Caco-2 (cell line): ENCODE measurements at regions of chr6 and their contacts with region 1.

Region 1: DNA sequence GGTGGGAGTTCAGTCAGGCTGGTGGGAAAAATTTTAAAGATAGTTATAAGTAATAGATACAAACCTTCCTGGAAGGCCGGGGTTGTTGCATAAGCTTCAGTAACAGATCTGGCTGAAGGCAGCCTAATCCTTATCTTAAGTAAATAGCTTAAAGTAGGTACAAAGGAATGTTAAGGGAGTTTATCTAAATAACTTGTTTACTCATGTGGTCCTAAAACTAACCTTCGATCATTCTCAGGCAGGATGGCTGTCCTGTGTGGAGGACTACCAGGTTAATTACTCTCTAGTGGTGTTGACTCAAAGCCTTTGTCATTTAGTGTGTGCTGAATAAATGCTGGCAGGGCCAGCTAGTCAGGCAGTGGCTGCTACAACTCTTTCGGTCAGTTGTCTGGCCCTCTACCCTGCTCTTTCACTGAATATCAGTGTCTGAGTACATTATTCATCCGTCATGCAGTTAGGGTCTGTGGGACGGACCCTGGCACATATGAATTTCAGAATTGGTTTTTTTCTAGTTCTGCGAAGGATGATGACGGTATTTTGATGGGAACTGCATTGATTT is 131.6 kb upstream of the TAB2 start:
- DNase-seq: peak in 1 of 2 experiments; percentile 50
- H3K4me3 ChIP-seq: no peak overlapping the region
- H3K4me3 Mint-ChIP-seq: no peak overlapping the region
- H3K27ac Mint-ChIP-seq: no peak overlapping the region
- H3K4me1 ChIP-seq: no peaks in the 10 kb centered on the region
- H3K4me1 Mint-ChIP-seq: no peaks in the 10 kb centered on the region
- H3K27me3 ChIP-seq: no peaks in the 10 kb centered on the region
- H3K27me3 Mint-ChIP-seq: no peaks in the 10 kb centered on the region
- CTCF ChIP-seq: no peak

Region 2: GRCh38 chr6:149112976-149113375 is 72.9 kb before region 1 on chr6:
- CTCF ChIA-PET with region 1: no interaction called
- POLR2A ChIA-PET with region 1: no interaction called
- intact Hi-C with region 1: no loop called
- DNase-seq: no peak
- H3K4me3 ChIP-seq: no peak overlapping the region
- H3K4me3 Mint-ChIP-seq: no peak overlapping the region
- H3K27ac Mint-ChIP-seq: no peak overlapping the region
- H3K4me1 ChIP-seq: no peaks in the 10 kb centered on the region
- H3K4me1 Mint-ChIP-seq: no peaks in the 10 kb centered on the region
- H3K27me3 ChIP-seq: no peaks in the 10 kb centered on the region
- H3K27me3 Mint-ChIP-seq: no peaks in the 10 kb centered on the region
- CTCF ChIP-seq: no peak

Region 3: GRCh38 chr6:149223904-149224351 is 38.0 kb after region 1 on chr6:
- CTCF ChIA-PET with region 1: no interaction called
- POLR2A ChIA-PET with region 1: no interaction called
- intact Hi-C with region 1: loop called (anchors 5 kb)
- DNase-seq: no peak
- H3K4me3 ChIP-seq: no peak overlapping the region
- H3K4me3 Mint-ChIP-seq: no peak overlapping the region
- H3K27ac Mint-ChIP-seq: no peak overlapping the region
- H3K4me1 ChIP-seq: peaks cover 9% of the 10 kb centered on the region
- H3K4me1 Mint-ChIP-seq: peaks cover 11% of the 10 kb centered on the region
- H3K27me3 ChIP-seq: no peaks in the 10 kb centered on the region; the same call in 1 of the 2 replicates
- H3K27me3 Mint-ChIP-seq: no peaks in the 10 kb centered on the region
- CTCF ChIP-seq: no peak

Region 4: DNA sequence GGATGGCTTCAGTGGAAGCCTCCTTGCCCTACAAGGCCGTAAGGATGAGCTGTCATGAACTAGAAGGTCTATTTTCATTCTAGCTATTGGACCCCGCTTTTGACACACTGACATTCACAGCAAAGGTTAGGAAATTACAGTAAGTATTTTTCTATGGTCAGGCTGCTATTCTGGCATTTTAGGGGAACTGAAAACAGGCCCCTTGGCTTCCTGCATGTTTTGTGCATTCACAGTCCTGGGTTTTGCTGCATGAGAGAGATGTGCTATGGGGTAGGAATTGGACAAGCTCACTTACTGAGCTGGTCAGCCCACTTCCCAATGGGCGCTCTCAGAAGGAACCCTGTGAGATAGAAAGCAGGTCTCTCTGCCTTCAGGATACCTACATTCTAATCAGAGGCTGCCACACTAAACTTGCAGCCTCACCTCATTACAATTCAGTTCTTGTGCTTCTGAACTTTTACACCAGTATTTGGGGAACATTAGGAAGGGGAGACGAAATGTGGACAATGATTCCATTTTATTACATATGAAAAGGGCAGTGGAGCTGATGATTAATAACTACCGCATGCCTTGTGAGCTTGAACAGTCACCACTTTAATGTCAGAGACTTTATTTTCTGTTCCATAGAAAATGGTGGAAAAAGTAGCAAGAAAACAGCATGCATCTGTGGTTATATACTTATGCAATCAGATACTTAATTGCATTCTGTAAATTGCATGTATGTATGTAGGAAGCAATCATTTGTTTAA is 45.0 kb after region 1 on chr6:
- CTCF ChIA-PET with region 1: no interaction called
- POLR2A ChIA-PET with region 1: no interaction called
- intact Hi-C with region 1: loop called (anchors 2 kb)
- DNase-seq: no peak
- H3K4me3 ChIP-seq: no peak overlapping the region
- H3K4me3 Mint-ChIP-seq: no peak overlapping the region
- H3K27ac Mint-ChIP-seq: no peak overlapping the region
- H3K4me1 ChIP-seq: peaks cover 27% of the 10 kb centered on the region
- H3K4me1 Mint-ChIP-seq: peaks cover 27% of the 10 kb centered on the region
- H3K27me3 ChIP-seq: no peaks in the 10 kb centered on the region; the same call in 1 of the 2 replicates
- H3K27me3 Mint-ChIP-seq: no peaks in the 10 kb centered on the region
- CTCF ChIP-seq: no peak